Activated CD4-positive, alpha-beta memory T cell treated with anti-CD3 and anti-CD28 coated beads for 36 hours (primary cell): ENCODE measurements at regions of chr3 and their contacts with region 1.

Region 1: DNA sequence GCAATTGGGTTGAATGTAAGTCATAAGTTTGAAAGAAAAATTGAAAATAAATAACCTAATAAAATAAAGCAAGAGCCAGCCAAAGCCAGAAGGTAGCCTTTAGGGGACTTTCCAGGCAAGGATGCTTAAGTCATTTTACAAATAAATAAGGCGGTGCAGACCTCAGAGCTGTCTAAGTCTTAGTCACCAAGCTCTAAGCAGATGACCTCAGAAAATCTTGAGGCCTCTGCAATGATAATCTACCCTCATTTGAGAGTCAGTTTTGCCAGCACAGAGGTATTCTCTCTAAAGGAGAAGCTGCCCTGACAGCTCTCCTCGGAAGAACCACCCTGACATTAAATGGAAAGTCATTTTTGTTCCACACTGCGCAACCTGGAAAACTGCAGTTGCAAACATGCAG is 113.9 kb downstream of the OXNAD1 start:
- DNase-seq: peak; percentile 38
- H3K4me3 Mint-ChIP-seq: no peak overlapping the region
- H3K27ac Mint-ChIP-seq: peak overlapping the region; percentile 70
- H3K4me1 Mint-ChIP-seq: peaks cover 82% of the 10 kb centered on the region
- H3K27me3 Mint-ChIP-seq: no peaks in the 10 kb centered on the region

Region 2: DNA sequence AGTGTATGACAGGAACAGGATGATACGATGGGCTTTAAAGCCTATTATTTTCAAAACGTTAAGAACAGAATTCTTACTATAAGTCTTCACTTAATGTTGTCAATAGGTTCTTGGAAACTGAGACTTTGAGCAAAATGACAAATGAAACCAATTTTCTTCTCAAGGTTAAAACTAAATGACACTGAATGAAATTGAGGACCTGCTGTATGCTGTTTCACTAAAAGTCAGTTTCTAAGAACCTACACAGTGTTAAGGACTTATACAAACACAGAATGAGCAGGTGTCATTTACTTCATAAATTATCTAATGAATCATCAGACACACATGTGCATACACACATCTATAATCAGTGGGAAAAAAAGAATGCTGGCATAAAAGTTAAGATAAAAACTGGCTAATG is 27.7 kb after region 1 on chr3:
- CTCF ChIA-PET with region 1: no interaction called
- POLR2A ChIA-PET with region 1: interaction called, 3 read pairs
- intact Hi-C with region 1: loop called (anchors 1 kb)
- DNase-seq: no peak
- H3K4me3 Mint-ChIP-seq: no peak overlapping the region
- H3K27ac Mint-ChIP-seq: peak overlapping the region; percentile 47
- H3K4me1 Mint-ChIP-seq: peaks cover 24% of the 10 kb centered on the region
- H3K27me3 Mint-ChIP-seq: no peaks in the 10 kb centered on the region